ENCODE measurements at regions of chr15 and their contacts with region 1.

Region 1: GRCh38 chr15:43824302-43825246 is at the start of gene MFAP1:
- DNase-seq: peak; percentile 95
- ATAC-seq: peak; percentile 85
- H3K4me3 Mint-ChIP-seq: peak within 1 kb of the TSS; percentile 100
- H3K27ac Mint-ChIP-seq: peak within 1 kb of the TSS; percentile 99
- H3K4me1 Mint-ChIP-seq: peaks cover 53% of the 10 kb centered on the region
- H3K27me3 Mint-ChIP-seq: no peaks in the 10 kb centered on the region
- total RNA-seq, gene MFAP1: 51.3 to 56.2 TPM

Region 2: DNA sequence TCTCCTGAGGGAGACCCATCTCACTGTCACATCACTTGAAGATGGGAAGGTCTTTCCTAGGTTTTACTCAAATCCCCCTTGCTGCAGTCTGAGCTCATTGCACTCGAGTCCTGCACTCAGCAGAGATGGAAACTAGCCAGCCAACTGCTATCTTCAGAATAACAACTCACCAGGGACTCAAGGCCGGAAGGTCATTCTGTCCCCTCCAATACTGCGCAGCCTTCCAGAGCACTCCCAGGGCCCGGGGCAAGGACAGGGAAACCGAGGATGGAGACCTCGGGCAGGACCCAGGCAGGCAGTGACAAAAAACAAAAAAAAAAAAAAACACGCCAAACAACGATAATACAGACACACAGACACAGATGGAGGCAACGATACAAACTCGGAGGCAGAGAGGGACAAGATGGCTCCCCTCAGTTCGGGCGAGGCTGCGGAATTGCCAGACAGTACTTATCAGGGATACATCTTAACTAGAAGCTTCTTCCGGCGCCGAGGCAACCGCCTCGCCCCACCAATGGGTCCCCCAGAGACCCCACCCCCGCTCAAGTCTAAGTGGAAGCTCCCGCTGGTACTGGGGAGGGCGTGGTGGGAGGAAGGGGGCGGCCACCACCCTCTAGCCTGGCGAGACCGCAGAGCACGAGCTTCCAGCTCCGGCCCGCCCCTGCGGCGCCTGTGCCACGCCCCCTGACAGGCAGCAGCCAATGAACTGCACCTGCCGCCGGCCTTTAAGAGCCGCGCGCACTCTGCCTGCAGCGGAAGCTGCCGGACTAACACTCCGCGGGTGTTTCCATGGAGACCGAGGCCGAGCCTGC is 314.2 kb before region 1 on chr15:
- CTCF ChIA-PET with region 1: no interaction called
- POLR2A ChIA-PET with region 1: no interaction called
- intact Hi-C with region 1: loop called in 1 of 2 experiments (anchors 1 kb)
- DNase-seq: peak; percentile 98
- ATAC-seq: peak; percentile 95
- H3K4me3 Mint-ChIP-seq: peak overlapping the region; percentile 91
- H3K27ac Mint-ChIP-seq: peak overlapping the region; percentile 90
- H3K4me1 Mint-ChIP-seq: peaks cover 32% of the 10 kb centered on the region
- H3K27me3 Mint-ChIP-seq: no peaks in the 10 kb centered on the region

Region 3: GRCh38 chr15:43791993-43792760 is 32.4 kb before region 1 on chr15 and contains the start of gene SERF2:
- CTCF ChIA-PET with region 1: interaction called, 4 read pairs
- POLR2A ChIA-PET with region 1: interaction called, 7 read pairs
- intact Hi-C with region 1: loop called (anchors 1 kb)
- DNase-seq: peak; percentile 100
- ATAC-seq: peak; percentile 98
- H3K4me3 Mint-ChIP-seq: peak within 1 kb of the TSS; percentile 97
- H3K27ac Mint-ChIP-seq: peak within 1 kb of the TSS; percentile 97
- H3K4me1 Mint-ChIP-seq: peaks cover 35% of the 10 kb centered on the region
- H3K27me3 Mint-ChIP-seq: no peaks in the 10 kb centered on the region
- total RNA-seq, gene SERF2: 710 to 718 TPM

Region 4: GRCh38 chr15:44195151-44195740 is 370.7 kb after region 1 on chr15 and contains the start of gene FRMD5:
- CTCF ChIA-PET with region 1: no interaction called
- POLR2A ChIA-PET with region 1: no interaction called
- intact Hi-C with region 1: loop called (anchors 2 to 5 kb)
- DNase-seq: peak; percentile 93
- ATAC-seq: peak; percentile 99
- H3K4me3 Mint-ChIP-seq: peak within 1 kb of the TSS; percentile 75
- H3K27ac Mint-ChIP-seq: no peak within 1 kb of the TSS
- H3K4me1 Mint-ChIP-seq: peaks cover 16% of the 10 kb centered on the region
- H3K27me3 Mint-ChIP-seq: peaks cover 49% of the 10 kb centered on the region
- total RNA-seq, gene FRMD5: 0.16 to 0.30 TPM

Region 5: GRCh38 chr15:44308415-44308814 is 483.8 kb after region 1 on chr15:
- CTCF ChIA-PET with region 1: no interaction called
- POLR2A ChIA-PET with region 1: no interaction called
- intact Hi-C with region 1: loop called in 1 of 2 experiments (anchors 5 kb)
- DNase-seq: peak; percentile 62
- ATAC-seq: peak; percentile 90
- H3K4me3 Mint-ChIP-seq: peak overlapping the region; percentile 58
- H3K27ac Mint-ChIP-seq: peak overlapping the region; percentile 92
- H3K4me1 Mint-ChIP-seq: peaks cover 48% of the 10 kb centered on the region
- H3K27me3 Mint-ChIP-seq: no peaks in the 10 kb centered on the region

Region 6: GRCh38 chr15:44435893-44436667 is 611.5 kb after region 1 on chr15:
- CTCF ChIA-PET with region 1: no interaction called
- POLR2A ChIA-PET with region 1: no interaction called
- intact Hi-C with region 1: no loop called
- DNase-seq: no peak
- ATAC-seq: peak; percentile 85
- H3K4me3 Mint-ChIP-seq: no peak overlapping the region
- H3K27ac Mint-ChIP-seq: peak overlapping the region; percentile 56
- H3K4me1 Mint-ChIP-seq: peaks cover 54% of the 10 kb centered on the region
- H3K27me3 Mint-ChIP-seq: no peaks in the 10 kb centered on the region

Measured in activated CD4-positive, alpha-beta T cell treated with anti-CD3 and anti-CD28 coated beads for 36 hours (primary cell).